ENCODE measurements at regions of chr7 and their contacts with region 1.

Region 1: DNA sequence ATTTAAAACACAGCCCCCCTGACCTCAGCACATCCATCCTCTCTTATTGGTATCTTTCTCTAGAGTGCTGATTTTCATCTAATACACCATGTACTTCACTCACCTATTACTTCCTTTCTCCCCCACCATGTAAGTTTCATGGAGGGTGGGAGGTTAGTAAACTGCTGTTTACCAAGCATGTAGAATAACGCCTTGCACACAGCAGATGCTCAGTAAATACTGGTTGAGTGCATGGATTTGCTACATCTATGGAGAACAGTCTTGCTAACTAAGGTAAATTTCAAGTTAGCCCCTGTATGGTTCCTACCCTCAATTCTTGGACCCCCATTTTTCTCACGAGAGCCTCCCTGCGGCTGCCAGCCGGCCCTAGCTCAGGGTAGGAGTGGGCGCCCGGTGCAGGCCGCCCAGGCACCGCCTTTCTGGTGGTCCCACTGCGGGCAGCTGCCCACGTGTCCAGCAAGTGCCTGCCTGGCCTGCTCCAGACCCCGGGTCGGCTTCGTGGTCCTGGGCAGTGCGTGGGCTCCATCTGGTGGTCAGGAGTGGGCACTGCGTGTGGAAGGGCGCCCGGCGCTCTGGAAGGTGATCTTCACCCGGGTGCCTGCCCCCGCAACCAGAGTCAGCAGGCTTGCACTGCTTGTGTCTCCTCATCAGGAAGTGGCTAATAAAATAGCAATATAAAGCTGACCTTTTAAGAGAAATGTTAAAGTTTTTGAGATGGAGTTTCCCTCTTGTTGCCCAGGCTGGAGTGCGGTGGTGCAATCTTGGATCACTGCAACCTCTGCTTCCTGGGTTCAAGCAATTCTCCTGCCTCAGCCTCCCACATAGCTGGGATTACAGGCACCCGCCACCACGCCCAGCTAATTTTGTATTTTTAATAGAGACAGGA is 63.4 kb upstream of the DNAJB6 start:
- DNase-seq: peak; percentile 91
- ATAC-seq: peak; percentile 81

Region 2: GRCh38 chr7:156907656-156908055 is 365.8 kb before region 1 on chr7:
- intact Hi-C with region 1: loop called (anchors 5 kb)
- DNase-seq: no peak
- ATAC-seq: no peak

Region 3: GRCh38 chr7:156949541-156950380 is 323.7 kb before region 1 on chr7 and contains the start of gene NOM1:
- intact Hi-C with region 1: loop called (anchors 5 kb)
- DNase-seq: peak; percentile 96
- ATAC-seq: peak; percentile 98
- total RNA-seq, gene NOM1: 6.6 TPM

Region 4: GRCh38 chr7:156969972-156970420 is 303.5 kb before region 1 on chr7:
- intact Hi-C with region 1: loop called (anchors 5 kb)
- DNase-seq: no peak
- ATAC-seq: no peak

Region 5: DNA sequence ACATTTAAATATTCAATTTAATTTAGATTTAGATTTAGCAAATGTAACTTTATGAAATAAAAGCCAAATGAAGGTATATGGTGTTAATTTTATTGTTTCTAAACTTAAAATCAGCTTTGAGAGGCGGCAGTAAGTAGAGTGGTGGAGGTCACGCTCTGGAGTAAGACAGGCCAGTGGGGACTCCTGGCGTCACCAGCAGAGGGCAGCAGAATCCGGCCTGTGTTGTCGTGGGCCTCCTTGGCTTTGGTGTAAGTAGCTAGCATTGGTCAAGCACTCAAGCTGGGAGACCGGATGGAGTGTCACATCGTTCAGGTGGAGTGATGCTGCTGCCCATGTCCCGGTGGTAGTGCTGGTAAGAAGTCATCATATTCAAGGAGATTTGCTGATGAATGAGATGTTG is 35.4 kb before region 1 on chr7:
- intact Hi-C with region 1: no loop called
- DNase-seq: no peak
- ATAC-seq: no peak

Region 6: DNA sequence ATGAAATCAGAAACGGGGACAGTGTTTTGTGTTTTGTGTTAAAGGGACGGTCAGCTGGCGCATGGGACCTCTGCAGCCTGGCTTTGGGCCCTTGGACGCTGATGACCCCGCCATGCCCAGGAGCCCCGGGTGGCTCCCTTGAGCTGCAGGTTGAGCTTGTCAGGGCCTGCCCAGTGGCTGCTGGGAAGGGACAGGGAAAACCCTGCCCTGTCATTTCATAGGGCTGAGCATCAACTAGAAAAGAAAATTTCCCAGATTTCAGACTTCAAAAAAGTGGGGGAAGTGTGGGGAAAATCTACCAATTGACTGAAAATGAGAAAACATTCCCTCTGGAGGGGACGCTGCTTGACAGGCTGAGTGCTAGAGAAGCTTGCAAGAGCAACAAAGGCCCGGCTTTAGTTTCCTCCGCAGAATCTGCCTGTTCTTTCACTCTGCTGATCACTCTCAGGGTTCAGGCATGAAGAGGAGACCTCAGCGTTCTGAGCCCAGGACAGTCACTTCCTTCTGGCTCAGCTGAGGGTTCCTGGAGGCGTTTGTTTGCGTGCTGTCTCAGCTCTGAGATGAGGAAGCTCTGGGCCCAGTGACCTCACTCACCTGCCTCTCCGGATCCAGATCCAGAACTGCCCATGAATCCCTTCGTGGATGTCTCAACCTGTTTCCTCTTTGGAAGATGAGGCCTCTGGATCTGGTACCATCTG is 44.7 kb after region 1 on chr7:
- intact Hi-C with region 1: no loop called
- DNase-seq: no peak
- ATAC-seq: peak; percentile 40

Region 7: DNA sequence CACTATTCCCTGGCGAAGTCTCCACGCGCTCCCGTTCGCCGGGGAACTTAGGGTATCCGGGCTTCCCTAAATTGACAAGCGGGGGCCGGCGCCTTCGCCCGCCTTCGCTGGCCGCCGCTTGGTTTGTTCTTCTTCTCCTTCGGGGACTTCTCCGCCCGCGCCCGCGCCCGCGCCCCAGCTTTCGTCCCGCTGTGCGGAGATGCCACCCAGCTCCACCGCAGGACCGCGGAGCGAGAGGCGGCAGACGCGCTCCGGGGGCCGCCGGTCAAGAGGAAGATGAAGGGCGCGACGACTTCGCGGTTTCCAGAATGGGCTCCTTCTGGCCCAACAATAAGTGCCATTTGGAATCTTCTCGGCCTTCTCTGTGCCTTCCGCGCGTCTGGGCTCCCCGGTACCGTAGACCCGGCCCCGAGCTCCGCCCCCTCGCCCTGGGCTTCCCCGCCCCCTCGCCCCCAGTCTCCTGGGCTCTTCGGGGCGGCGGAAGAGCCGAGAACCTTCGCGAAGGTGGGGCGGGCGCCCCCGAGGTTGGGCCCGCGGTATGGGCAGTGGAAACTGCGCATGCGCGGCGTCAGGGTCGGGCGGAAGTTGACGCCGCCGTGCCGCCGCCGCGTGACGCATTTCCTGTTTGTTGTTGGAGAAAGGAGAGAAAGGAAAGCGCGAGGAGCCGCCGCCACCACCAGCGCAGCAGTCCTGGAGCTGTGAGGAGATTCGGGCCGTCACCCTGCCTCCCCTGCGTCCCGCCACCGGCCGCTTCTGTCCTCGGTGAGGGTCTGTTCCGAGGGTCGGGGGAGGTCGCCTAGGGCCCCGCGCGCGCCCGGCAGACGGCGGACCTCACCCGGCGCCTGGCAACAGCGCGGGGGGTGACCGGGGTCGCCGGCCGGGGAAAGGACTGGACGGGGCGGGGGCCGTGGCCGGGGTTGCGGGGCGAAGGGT is 63.2 kb after region 1 on chr7 and contains the start of gene DNAJB6:
- intact Hi-C with region 1: loop called (anchors 5 kb)
- DNase-seq: peak; percentile 95
- ATAC-seq: peak; percentile 92
- total RNA-seq, gene DNAJB6: 195 TPM

Region 8: GRCh38 chr7:157386979-157387800 is 113.7 kb after region 1 on chr7:
- intact Hi-C with region 1: loop called (anchors 10 kb)
- DNase-seq: peak; percentile 94
- ATAC-seq: peak; percentile 88

Region 9: DNA sequence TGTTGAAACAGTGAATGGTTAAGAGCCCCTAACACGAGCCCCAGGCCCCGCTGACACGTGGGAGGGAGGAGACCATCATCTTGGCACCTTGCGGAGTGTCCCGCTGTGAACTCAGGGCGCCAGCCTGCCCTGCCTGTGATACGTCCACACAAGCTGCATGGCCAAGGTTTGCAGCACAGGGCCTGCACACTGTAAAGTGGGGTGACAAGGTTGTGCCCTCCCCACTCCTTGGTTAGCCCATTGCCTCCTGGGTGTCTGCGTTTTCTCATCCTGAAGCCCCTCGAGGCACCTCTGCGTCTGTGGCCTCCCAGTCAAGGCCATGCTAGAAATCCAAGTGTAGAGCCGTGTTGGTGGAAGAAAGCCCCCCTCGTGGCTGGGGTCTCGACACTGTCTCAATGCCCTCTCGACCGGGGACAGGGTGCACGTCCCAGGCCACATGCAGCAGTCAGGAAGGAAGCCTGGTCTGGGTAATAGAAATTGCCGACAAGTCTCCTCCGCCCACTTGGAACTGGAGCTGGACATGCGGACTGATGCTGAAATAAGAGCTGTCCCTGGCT is 255.4 kb after region 1 on chr7:
- intact Hi-C with region 1: no loop called
- DNase-seq: no peak
- ATAC-seq: no peak

Measured in Right ventricle myocardium inferior (tissue), 1 donor.